Astrocyte of the cerebellum (primary cell): ENCODE measurements at regions of chr4 and their contacts with region 1.

Region 1: DNA sequence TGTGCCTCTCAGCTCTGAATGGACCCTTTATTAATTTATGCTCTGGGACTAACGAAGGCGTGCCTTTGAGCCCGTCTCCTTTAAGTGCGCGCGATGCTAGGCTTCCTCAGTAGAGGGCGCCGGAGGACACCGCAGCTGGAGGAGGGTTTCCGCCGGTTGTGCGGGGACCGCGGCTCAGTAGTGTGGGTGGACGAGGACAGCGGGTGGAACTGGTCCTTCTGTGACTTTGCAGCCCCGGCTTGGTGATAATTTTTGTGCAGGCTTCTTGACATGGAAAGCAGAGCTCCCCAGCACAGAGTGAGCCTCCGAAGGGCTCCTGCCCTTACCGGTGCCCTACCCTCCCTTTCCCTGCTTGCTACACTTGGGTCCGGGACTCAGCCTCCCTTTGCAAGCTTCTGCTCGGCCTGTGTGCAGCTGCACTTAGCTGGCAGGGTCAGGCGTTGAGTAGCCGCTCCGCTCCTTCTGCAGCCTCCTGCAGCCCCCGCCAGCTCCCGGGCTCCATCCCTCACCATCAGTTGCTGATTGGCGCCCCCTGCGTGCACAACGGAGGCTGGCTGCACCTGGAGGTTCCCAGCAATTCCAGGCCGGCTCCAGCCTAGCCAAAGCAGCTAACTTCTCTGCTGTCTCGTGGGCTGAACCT is 26.8 kb upstream of the BOD1L1 start:
- DNase-seq: peak; percentile 39
- H3K4me3 ChIP-seq: peak overlapping the region; percentile 51
- CTCF ChIP-seq: peak; percentile 89

Region 2: DNA sequence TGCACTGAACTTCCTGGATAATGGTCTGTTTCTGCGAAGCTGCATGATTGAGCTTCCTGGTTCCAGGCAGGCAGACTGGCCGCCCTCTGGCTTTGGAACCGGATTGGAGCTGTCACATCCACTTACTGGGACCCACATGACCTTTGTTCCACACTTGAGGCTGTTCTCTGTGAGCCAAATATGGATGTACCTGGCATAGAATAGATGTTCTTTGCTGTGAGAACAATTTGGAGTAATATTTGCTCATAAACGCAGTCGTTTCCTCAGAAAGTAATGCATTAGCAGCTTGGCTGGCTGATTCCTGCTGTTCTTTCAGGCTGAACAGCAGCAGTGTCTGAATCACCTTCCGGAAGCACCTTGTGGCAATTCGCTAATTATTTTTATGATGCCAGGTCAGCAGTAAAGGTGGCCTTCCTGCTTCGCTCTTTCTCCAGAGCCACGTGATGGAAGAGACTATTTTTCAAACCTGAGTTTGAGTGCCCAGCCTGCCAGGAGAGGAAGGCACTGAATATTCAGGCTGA is 51.3 kb after region 1 on chr4:
- in situ Hi-C with region 1: no loop called
- DNase-seq: no peak
- H3K4me3 ChIP-seq: no peak overlapping the region
- CTCF ChIP-seq: no peak

Region 3: GRCh38 chr4:14087459-14087858 is 433.2 kb after region 1 on chr4:
- in situ Hi-C with region 1: loop called (anchors 25 kb)
- DNase-seq: no peak
- H3K4me3 ChIP-seq: no peak overlapping the region
- CTCF ChIP-seq: no peak

Region 4: DNA sequence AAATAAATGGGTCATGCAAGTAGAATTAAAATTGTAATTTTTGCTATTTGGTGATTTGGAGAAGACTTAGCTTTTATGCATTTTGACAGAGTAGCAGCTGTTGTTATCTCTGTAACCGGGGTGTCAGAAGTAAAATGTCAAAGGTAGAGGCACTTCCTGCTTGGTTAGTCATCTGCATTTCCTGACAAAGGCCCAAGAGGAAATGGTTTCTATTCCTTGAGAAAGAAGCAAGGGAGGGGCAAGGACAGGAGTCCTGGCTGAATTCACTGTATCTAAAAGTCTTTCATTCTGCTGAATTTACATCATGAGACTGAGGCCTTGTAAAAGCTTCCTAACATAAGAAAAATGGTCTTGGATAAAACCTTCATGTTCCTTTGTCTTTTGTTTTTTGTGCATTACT is 524.1 kb after region 1 on chr4:
- in situ Hi-C with region 1: loop called (anchors 25 kb)
- DNase-seq: no peak
- H3K4me3 ChIP-seq: no peak overlapping the region
- CTCF ChIP-seq: no peak

Region 5: DNA sequence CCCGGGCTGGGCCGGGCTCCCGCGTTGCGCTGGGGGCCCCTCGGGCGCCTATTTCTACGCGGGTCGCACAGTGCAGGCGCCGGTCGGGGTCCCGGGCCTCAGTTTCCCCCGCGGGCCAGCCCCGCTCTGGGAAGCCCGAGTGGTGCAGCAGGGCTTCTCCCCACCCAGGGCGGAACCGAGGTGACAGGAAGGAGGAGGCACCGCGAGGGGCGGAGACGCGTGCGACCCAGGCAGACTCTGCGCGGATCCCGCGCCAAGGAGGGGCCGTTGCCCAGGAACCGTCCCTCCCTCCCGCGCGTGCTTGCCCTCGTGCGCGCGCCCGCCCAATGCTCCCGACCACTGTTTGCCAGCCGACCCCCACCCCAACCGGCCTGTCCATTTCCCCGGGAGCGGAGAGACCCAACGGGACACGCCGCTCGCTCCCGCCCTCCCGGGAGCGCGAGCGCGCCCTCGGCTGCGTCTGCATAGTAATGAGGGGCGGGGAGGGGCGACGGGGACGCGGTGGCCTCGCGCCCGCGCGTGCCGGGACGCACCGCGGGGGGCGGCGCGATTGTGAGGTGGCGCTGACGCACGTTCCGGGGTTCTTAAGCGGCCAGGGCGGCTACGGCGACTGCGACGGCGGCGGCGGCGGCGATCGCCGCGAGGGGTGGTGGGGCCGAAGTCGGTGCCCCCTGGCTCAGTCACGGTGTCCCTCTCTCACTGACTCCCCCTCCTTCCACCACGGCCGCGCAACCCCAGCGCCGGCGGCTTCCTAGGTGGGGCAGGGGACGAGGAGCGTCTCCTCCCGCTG is 1347.8 kb after region 1 on chr4 and contains the start of gene CPEB2:
- in situ Hi-C with region 1: loop called (anchors 25 kb)
- DNase-seq: peak; percentile 89
- H3K4me3 ChIP-seq: peak within 1 kb of the TSS; percentile 88
- CTCF ChIP-seq: no peak

Region 6: DNA sequence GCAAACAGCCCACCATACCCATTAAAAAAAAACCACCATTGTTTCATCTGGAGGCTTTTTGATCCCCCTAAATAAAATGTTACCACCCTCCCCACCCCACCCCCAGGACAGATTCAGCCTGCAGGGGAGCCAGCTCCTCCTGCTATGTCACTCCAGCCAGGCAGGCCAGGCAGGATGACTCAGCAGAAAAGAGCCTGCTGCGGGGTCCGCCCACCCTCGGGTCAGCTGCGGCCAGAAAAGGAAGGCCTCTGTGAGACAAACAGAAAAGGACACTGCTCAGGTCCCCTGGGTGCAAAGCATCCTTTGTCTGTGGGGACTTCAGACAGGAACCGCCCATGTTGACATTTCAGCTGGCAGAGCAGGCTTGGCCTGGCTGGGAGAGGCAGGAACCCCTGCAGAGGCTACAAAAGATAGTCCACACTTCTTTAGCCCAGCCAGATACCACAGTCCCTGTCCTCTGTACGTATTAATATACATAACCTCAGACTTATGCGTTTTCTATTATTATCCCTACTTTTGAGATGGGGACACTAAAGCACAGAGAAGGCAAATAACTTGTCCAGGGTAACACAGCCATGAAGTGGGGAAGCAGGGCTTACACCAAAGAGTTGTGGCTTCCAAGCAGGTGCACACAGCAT is 1495.7 kb after region 1 on chr4:
- in situ Hi-C with region 1: loop called (anchors 25 kb)
- DNase-seq: peak; percentile 32
- H3K4me3 ChIP-seq: no peak overlapping the region
- CTCF ChIP-seq: no peak